ENCODE measurements at regions of chr3 and their contacts with region 1.

Region 1: GRCh38 chr3:12810013-12810780 is 13.7 kb downstream of the CAND2 start:
- DNase-seq: peak; percentile 41
- ATAC-seq: peak; percentile 100
- H3K4me3 ChIP-seq: peak overlapping the region; percentile 70; the same call in 1 of the 2 replicates
- H3K27ac ChIP-seq: no peak overlapping the region
- H3K4me1 ChIP-seq: no peaks in the 10 kb centered on the region
- H3K27me3 ChIP-seq: peaks cover 0 to 2% of the 10 kb centered on the region in 2 experiments; a peak in 1 of 4 replicates
- CTCF ChIP-seq: peak; percentile 53 to 77 (median 71)
- EP300 ChIP-seq: no peak
- POLR2A ChIP-seq: no peak
- RAD21 ChIP-seq: 0 out of 2 replicates have a peak, but pooled peaks have one; percentile 24

Region 2: DNA sequence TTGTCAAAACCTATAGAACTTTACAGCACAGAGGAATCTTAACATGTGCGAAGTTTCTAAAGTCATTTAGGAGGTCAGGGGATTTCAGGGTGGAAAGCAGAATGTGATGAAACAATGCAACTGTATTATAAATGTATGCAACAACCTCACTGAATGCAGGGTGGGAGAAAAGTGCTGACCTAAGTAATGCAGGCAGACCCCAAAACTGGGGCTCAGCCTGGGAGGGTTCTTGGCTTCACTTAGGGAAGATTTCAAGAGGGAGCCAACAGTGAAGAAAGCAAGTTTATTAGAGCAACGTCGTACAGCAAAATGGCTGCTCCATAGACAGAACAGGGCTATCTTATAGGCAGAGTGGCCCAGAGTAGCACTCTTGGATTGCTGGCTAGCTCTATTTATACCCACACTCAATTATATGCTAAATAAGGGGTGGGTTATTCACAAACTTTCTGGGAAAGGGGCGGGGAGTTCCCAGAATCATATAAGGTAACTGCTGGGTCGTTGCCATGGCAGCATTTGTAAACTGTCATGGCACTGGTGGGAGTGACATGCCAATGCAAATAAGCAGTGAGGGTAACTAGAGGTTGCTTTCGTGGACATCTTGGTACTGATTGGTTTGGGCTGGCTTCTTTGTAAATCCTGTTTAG is 27.9 kb before region 1 on chr3:
- CTCF ChIA-PET with region 1: interaction called, 20 read pairs
- POLR2A ChIA-PET with region 1: no interaction called
- RAD21 ChIA-PET with region 1: interaction called, 9 read pairs
- SMC1A ChIA-PET with region 1: no interaction called
- in situ Hi-C with region 1: no loop called
- intact Hi-C with region 1: no loop called
- DNase-seq: no peak
- ATAC-seq: peak; percentile 36; the same call in 1 of the 3 replicates
- H3K4me3 ChIP-seq: no peak overlapping the region
- H3K27ac ChIP-seq: no peak overlapping the region
- H3K4me1 ChIP-seq: no peaks in the 10 kb centered on the region
- H3K27me3 ChIP-seq: peaks cover 2 to 4% of the 10 kb centered on the region in 2 experiments; a peak in 2 of 4 replicates
- CTCF ChIP-seq: no peak
- EP300 ChIP-seq: no peak
- POLR2A ChIP-seq: no peak
- RAD21 ChIP-seq: no peak

Region 3: DNA sequence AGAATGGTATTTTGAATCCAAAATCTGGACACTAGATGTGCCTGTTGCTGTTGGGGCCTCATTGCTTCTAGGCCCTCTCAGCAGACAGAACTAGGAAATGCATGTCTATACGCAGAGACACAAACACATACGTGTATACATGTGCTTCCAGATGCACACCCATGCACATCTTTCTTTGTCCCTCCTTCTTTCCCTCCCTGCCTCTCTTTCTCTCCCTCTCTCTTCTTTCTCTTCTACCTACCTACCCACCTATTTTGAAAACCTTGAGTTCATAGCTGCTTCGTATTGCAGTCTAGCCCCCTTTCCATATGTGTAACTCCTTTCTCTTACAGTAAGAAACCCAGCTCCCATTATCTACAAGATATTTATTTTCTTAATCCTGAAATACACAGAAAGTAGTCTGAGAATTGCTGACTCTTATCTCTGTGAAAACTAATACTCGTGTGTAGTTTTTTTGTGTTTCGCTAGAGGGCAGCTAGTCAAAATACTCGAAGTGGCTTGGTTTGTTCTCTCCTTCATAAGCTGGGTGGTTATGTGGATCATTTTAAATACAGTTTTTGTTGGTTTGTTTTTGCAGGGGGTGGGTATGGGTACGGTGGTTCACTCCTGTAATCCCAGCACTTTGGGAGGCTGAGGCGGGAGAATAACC is 12.7 kb after region 1 on chr3:
- CTCF ChIA-PET with region 1: interaction called, 22 read pairs
- POLR2A ChIA-PET with region 1: no interaction called
- RAD21 ChIA-PET with region 1: no interaction called
- SMC1A ChIA-PET with region 1: interaction called, 3 read pairs
- in situ Hi-C with region 1: no loop called
- intact Hi-C with region 1: no loop called
- DNase-seq: no peak
- ATAC-seq: peak; percentile 85
- H3K4me3 ChIP-seq: no peak overlapping the region
- H3K27ac ChIP-seq: no peak overlapping the region
- H3K4me1 ChIP-seq: no peaks in the 10 kb centered on the region
- H3K27me3 ChIP-seq: no peaks in the 10 kb centered on the region
- CTCF ChIP-seq: peak; percentile 39 to 46 (median 46); a peak in 5 of 6 replicates
- EP300 ChIP-seq: no peak
- POLR2A ChIP-seq: no peak
- RAD21 ChIP-seq: 0 out of 2 replicates have a peak, but pooled peaks have one; percentile 6

Region 4: GRCh38 chr3:13200946-13201345 is 390.7 kb after region 1 on chr3:
- CTCF ChIA-PET with region 1: no interaction called
- POLR2A ChIA-PET with region 1: no interaction called
- RAD21 ChIA-PET with region 1: no interaction called
- SMC1A ChIA-PET with region 1: no interaction called
- in situ Hi-C with region 1: no loop called
- intact Hi-C with region 1: no loop called
- DNase-seq: no peak
- ATAC-seq: peak; percentile 68
- H3K4me3 ChIP-seq: no peak overlapping the region
- H3K27ac ChIP-seq: no peak overlapping the region
- H3K4me1 ChIP-seq: no peaks in the 10 kb centered on the region
- H3K27me3 ChIP-seq: peaks cover 0 to 3% of the 10 kb centered on the region in 2 experiments; a peak in 3 of 4 replicates
- CTCF ChIP-seq: peak in 1 of 3 experiments; percentile 52; a peak in 2 of 6 replicates
- EP300 ChIP-seq: no peak
- POLR2A ChIP-seq: no peak
- RAD21 ChIP-seq: peak; percentile 35; the same call in 1 of the 2 replicates

Measured in GM12878 (cell line).